ENCODE measurements at regions of chr7 and their contacts with region 1.

Region 1: GRCh38 chr7:138459413-138460175 is 465 bp upstream of the TRIM24 start:
- DNase-seq: peak; percentile 95 to 99 (median 98)
- ATAC-seq: peak; percentile 83
- H3K4me3 ChIP-seq: peak overlapping the region; percentile 52
- H3K4me3 Mint-ChIP-seq: peak overlapping the region; percentile 72
- H3K27ac ChIP-seq: peak overlapping the region in 1 of 2 donors; percentile 40
- H3K27ac Mint-ChIP-seq: peak overlapping the region; percentile 38
- H3K4me1 ChIP-seq: peaks cover 18% of the 10 kb centered on the region
- H3K4me1 Mint-ChIP-seq: peaks cover 23% of the 10 kb centered on the region
- H3K27me3 ChIP-seq: no peaks in the 10 kb centered on the region
- H3K27me3 Mint-ChIP-seq: no peaks in the 10 kb centered on the region
- CTCF ChIP-seq: peak; percentile 39

Region 2: DNA sequence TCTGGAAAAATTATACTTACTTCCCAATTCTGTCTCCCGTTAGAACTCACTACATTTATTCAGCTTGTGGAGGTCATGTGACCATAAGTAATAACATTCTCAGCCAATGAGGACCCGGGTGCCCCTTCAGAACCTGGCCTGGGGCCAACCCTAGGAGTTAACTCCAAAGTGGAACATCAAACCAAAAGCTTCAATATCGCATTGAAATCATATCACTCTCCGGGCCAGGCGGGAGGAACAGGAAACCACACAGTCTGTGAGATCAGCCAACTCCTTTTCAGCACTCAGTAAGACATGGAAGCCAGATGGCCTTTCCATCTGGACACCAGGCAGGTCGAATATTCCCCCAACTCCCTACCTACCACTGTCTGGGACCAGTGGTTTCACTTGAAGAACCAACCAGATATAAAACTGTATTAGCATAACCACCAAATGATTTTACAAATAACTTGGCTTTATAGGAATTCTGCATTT is 463.2 kb before region 1 on chr7:
- CTCF ChIA-PET with region 1: no interaction called
- POLR2A ChIA-PET with region 1: interaction called, 4 read pairs
- intact Hi-C with region 1: loop called in 1 of 2 experiments (anchors 5 kb)
- DNase-seq: peak in 2 of 14 experiments; percentile 23 to 28
- ATAC-seq: no peak
- H3K4me3 ChIP-seq: no peak overlapping the region
- H3K4me3 Mint-ChIP-seq: no peak overlapping the region
- H3K27ac ChIP-seq: no peak overlapping the region
- H3K27ac Mint-ChIP-seq: no peak overlapping the region
- H3K4me1 ChIP-seq: peaks cover 33% of the 10 kb centered on the region
- H3K4me1 Mint-ChIP-seq: peaks cover 67% of the 10 kb centered on the region
- H3K27me3 ChIP-seq: no peaks in the 10 kb centered on the region
- H3K27me3 Mint-ChIP-seq: no peaks in the 10 kb centered on the region
- CTCF ChIP-seq: no peak

Region 3: DNA sequence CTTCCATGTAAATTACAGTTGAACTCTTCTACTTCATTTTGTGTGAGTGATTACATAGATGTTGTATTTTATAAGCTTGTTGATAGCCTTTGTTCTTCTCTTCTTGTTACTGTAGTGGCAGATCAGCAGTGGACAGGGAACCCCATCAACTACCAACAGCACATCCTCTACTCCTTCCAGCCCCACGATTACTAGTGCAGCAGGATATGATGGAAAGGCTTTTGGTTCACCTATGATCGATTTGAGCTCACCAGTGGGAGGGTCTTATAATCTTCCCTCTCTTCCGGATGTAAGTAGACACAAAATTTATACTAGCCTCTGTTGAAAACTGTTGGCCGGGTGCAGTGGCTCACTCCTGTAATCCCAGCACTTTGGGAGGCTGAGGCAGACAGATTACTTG is 111.1 kb after region 1 on chr7:
- CTCF ChIA-PET with region 1: interaction called, 3 read pairs
- POLR2A ChIA-PET with region 1: no interaction called
- intact Hi-C with region 1: loop called in 1 of 2 experiments (anchors 5 kb)
- DNase-seq: no peak
- ATAC-seq: no peak
- H3K4me3 ChIP-seq: no peak overlapping the region
- H3K4me3 Mint-ChIP-seq: no peak overlapping the region
- H3K27ac ChIP-seq: no peak overlapping the region
- H3K27ac Mint-ChIP-seq: no peak overlapping the region
- H3K4me1 ChIP-seq: no peaks in the 10 kb centered on the region
- H3K4me1 Mint-ChIP-seq: peaks cover 5% of the 10 kb centered on the region
- H3K27me3 ChIP-seq: no peaks in the 10 kb centered on the region
- H3K27me3 Mint-ChIP-seq: no peaks in the 10 kb centered on the region
- CTCF ChIP-seq: no peak

Region 4: GRCh38 chr7:138865843-138866242 is 406.2 kb after region 1 on chr7:
- CTCF ChIA-PET with region 1: no interaction called
- POLR2A ChIA-PET with region 1: no interaction called
- intact Hi-C with region 1: loop called in 1 of 2 experiments (anchors 10 kb)
- DNase-seq: peak; percentile 11 to 69 (median 41)
- ATAC-seq: peak; percentile 93
- H3K4me3 ChIP-seq: no peak overlapping the region
- H3K4me3 Mint-ChIP-seq: no peak overlapping the region
- H3K27ac ChIP-seq: no peak overlapping the region
- H3K27ac Mint-ChIP-seq: no peak overlapping the region
- H3K4me1 ChIP-seq: no peaks in the 10 kb centered on the region
- H3K4me1 Mint-ChIP-seq: no peaks in the 10 kb centered on the region
- H3K27me3 ChIP-seq: no peaks in the 10 kb centered on the region
- H3K27me3 Mint-ChIP-seq: peaks cover 4% of the 10 kb centered on the region
- CTCF ChIP-seq: peak; percentile 51

Region 5: GRCh38 chr7:138981332-138982203 is 522.0 kb after region 1 on chr7 and contains the start of gene KIAA1549:
- CTCF ChIA-PET with region 1: no interaction called
- POLR2A ChIA-PET with region 1: no interaction called
- intact Hi-C with region 1: no loop called
- DNase-seq: peak in 12 of 14 experiments; percentile 13 to 78 (median 39)
- ATAC-seq: peak; percentile 66
- H3K4me3 ChIP-seq: peak within 1 kb of the TSS; percentile 46
- H3K4me3 Mint-ChIP-seq: peak within 1 kb of the TSS; percentile 90
- H3K27ac ChIP-seq: no peak within 1 kb of the TSS
- H3K27ac Mint-ChIP-seq: no peak within 1 kb of the TSS
- H3K4me1 ChIP-seq: peaks cover 13% of the 10 kb centered on the region
- H3K4me1 Mint-ChIP-seq: peaks cover 19% of the 10 kb centered on the region
- H3K27me3 ChIP-seq: peaks cover 29 to 30% of the 10 kb centered on the region in 2 experiments
- H3K27me3 Mint-ChIP-seq: peaks cover 44% of the 10 kb centered on the region
- CTCF ChIP-seq: no peak
- total RNA-seq, gene KIAA1549: not detected

Region 6: GRCh38 chr7:139124084-139124914 is 664.7 kb after region 1 on chr7:
- CTCF ChIA-PET with region 1: no interaction called
- POLR2A ChIA-PET with region 1: no interaction called
- intact Hi-C with region 1: loop called in 1 of 2 experiments (anchors 10 kb)
- DNase-seq: no peak
- ATAC-seq: no peak
- H3K4me3 ChIP-seq: no peak overlapping the region
- H3K4me3 Mint-ChIP-seq: no peak overlapping the region
- H3K27ac ChIP-seq: no peak overlapping the region
- H3K27ac Mint-ChIP-seq: no peak overlapping the region
- H3K4me1 ChIP-seq: peaks cover 25% of the 10 kb centered on the region
- H3K4me1 Mint-ChIP-seq: peaks cover 34% of the 10 kb centered on the region
- H3K27me3 ChIP-seq: no peaks in the 10 kb centered on the region
- H3K27me3 Mint-ChIP-seq: no peaks in the 10 kb centered on the region
- CTCF ChIP-seq: no peak

Region 7: DNA sequence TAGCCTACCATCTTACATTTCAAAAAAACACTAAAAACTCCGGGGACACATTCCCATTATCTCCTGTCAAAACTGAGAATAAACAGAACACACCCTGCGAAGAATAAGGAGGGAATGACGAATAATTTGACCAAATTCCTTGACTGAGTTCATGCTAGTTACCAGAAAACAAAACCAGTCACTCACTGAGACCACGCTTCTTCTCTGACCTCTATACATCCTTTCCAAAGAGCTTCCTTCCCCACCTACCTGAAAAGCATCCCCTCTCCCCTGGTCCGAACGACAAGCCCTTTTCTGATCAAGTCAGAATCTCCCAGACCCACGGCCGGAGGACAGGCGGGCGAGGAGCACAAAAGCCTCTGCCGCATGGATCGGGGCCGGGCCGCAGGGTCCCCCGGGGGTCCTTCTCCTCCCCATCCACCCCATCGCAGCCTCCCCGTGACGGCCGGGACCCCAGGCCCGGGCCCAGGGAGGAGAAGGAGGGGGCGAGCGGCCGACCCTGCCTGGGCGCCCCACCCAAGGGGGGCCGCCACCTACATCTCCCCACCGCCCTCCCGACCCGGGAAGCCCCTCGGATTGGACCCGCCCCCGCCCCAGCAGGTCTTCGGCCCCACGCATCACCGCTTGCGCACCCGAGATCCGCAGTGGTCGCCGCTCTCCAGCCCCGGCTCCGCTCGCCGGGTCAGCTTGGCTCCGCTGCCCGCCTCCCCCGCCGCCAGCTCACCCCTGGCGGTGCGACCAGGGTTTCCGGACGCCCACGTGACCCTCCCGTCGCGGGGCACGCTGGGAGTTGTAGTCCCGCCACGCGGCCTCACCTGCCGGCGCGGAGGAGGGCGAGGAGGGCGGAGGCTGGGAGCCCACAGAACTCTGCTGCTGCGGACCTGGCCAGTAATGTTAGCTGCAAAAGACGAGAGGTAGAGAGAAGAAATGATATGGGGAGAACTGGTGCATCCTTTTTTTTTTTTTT is 1938.5 kb after region 1 on chr7 and contains the start of gene SLC37A3:
- CTCF ChIA-PET with region 1: no interaction called
- POLR2A ChIA-PET with region 1: no interaction called
- intact Hi-C with region 1: loop called in 1 of 2 experiments (anchors 5 kb)
- DNase-seq: peak; percentile 75 to 91 (median 84)
- ATAC-seq: peak; percentile 98
- H3K4me3 ChIP-seq: peak within 1 kb of the TSS; percentile 79
- H3K4me3 Mint-ChIP-seq: peak within 1 kb of the TSS; percentile 86
- H3K27ac ChIP-seq: peak within 1 kb of the TSS in 1 of 2 donors; percentile 53
- H3K27ac Mint-ChIP-seq: peak within 1 kb of the TSS; percentile 64
- H3K4me1 ChIP-seq: peaks cover 22% of the 10 kb centered on the region
- H3K4me1 Mint-ChIP-seq: peaks cover 33% of the 10 kb centered on the region
- H3K27me3 ChIP-seq: no peaks in the 10 kb centered on the region
- H3K27me3 Mint-ChIP-seq: no peaks in the 10 kb centered on the region
- CTCF ChIP-seq: no peak
- total RNA-seq, gene SLC37A3: 23.5 to 25.6 TPM

Measured in CD4-positive, alpha-beta T cell (primary cell).